Motor neuron (in vitro differentiated cells): ENCODE measurements at regions of chr4 and their contacts with region 1.

Region 1: DNA sequence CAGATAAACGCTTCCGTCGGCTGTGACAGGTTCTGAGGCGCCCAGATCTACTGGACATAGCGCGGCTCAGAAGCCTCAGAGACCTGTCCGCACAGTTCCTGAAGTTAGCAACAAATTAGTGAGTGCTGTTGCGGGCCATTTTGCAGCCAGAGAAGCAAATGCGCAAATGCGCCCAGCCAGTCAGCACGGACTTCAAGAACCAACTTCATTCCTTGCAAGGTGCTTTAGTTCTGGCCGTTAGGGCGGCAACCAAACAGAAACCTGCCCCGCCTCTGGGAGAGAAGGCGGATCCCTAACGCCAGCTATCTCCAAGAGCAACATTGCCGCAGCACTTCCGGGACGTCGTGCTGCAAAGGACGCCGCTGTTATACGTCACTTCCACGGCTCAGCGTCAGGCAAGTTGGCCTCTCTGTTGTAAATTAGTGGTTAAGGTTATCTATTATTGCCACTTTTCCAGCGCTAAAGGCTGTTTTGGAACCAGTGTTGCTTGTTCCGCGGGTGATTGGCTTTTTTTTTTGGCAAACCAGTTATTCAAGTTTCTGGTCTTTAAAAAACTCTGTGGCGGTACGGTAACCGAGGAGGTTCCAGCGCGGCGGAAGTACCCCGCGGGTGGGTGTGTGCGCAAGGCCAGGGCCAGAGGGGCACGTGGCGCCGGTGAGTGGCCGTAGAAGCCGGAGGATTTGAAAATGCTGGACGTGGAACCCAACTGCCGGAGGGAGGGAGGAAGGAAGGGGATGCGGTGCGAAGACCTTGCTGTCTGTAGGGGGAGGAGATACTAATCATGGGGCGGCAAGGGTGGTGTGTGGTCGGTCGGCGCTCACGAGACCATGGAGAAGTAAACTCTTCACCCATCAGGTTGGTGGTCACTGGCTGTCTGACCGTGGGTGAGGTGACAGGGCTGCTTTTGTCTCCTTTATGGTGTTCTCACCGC is at the start of gene GAR1:
- ATAC-seq: peak; percentile 93 to 98 (median 96)
- H3K4me3 ChIP-seq: peak within 1 kb of the TSS; percentile 59 to 97 (median 70)
- H3K27ac ChIP-seq: peak within 1 kb of the TSS; percentile 90 to 99
- H3K4me1 ChIP-seq: peaks cover 11 to 15% of the 10 kb centered on the region in 2 donors
- total RNA-seq, gene GAR1: 10.6 to 31.6 (median 15.7) TPM

Region 2: GRCh38 chr4:109406338-109406931 is 409.0 kb before region 1 on chr4:
- in situ Hi-C with region 1: no loop called
- ATAC-seq: peak; percentile 47 to 89 (median 60)
- H3K4me3 ChIP-seq: no peak overlapping the region
- H3K27ac ChIP-seq: no peak overlapping the region
- H3K4me1 ChIP-seq: peaks cover 0 to 5% of the 10 kb centered on the region in 2 donors

Region 3: DNA sequence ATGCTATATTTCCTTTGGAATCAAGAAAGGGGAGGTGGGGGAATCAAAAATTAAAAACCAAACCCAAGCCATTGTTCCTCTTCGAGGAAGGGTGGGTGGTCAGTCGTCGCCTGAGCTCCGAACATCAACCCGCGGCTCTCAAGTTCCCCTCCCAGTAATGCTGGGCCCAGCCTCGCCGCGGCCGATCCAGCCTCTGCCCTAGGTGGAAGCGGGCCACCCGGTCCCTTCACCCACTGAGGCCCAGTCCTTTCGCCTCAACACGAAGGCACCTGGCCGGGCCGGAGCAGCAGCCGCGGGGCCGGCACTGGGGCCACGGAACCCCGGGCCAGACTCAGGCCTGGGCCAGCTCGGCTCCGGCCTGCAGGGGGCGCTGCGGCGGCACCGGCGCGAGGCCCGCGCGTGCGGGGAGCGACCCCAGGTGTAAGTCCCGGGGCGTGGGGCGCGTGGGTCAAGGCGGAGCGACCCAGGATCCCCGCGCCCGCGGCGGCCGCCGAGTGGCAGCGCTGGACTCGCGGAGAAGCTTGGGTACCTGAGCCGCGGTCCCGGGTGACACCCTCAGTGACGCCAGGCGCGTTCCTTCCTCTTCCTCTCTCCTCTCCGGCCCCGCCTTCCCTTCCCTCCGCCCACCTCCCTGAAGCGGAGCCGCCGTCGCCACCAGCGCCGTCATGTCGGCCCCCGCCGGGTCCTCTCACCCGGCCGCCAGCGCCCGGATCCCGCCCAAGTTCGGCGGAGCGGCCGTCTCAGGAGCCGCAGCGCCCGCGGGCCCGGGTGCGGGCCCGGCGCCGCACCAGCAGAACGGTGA is 382.0 kb before region 1 on chr4 and contains the start of gene SEC24B:
- in situ Hi-C with region 1: loop called in 2 of 9 experiments (anchors 25 kb)
- ATAC-seq: peak; percentile 84 to 93 (median 90)
- H3K4me3 ChIP-seq: peak within 1 kb of the TSS; percentile 87 to 99 (median 98)
- H3K27ac ChIP-seq: peak within 1 kb of the TSS; percentile 86 to 95
- H3K4me1 ChIP-seq: peaks cover 11 to 21% of the 10 kb centered on the region in 2 donors
- total RNA-seq, gene SEC24B: 15.9 to 28.5 (median 22.4) TPM

Region 4: GRCh38 chr4:109548655-109549054 is 266.8 kb before region 1 on chr4:
- in situ Hi-C with region 1: loop called in 1 of 9 experiments (anchors 25 kb)
- ATAC-seq: peak in 2 of 8 experiments; percentile 49 to 77
- H3K4me3 ChIP-seq: no peak overlapping the region
- H3K27ac ChIP-seq: no peak overlapping the region
- H3K4me1 ChIP-seq: no peaks in the 10 kb centered on the region